Activated CD8-positive, alpha-beta memory T cell treated with anti-CD3 and anti-CD28 coated beads, Interleukin-2, amount 10 ng/mL, durations not matched to agents 7 days and 5 days (primary cell): ENCODE measurements at regions of chr17 and their contacts with region 1.

Region 1: GRCh38 chr17:58172369-58173071 is 5.7 kb downstream of the OR4D2 start:
- DNase-seq: peak; percentile 72
- ATAC-seq: peak; percentile 89
- H3K4me3 Mint-ChIP-seq: no peak overlapping the region
- H3K27ac Mint-ChIP-seq: no peak overlapping the region
- H3K4me1 Mint-ChIP-seq: peaks cover 21% of the 10 kb centered on the region
- H3K27me3 Mint-ChIP-seq: peaks cover 14% of the 10 kb centered on the region

Region 2: GRCh38 chr17:58121925-58122324 is 50.6 kb before region 1 on chr17:
- CTCF ChIA-PET with region 1: interaction called, 38 read pairs
- DNase-seq: peak; percentile 58
- ATAC-seq: peak; percentile 64
- H3K4me3 Mint-ChIP-seq: no peak overlapping the region
- H3K27ac Mint-ChIP-seq: no peak overlapping the region
- H3K4me1 Mint-ChIP-seq: no peaks in the 10 kb centered on the region
- H3K27me3 Mint-ChIP-seq: peaks cover 10% of the 10 kb centered on the region

Region 3: GRCh38 chr17:58153046-58153445 is 19.5 kb before region 1 on chr17:
- CTCF ChIA-PET with region 1: interaction called, 11 read pairs
- DNase-seq: peak; percentile 80
- ATAC-seq: peak; percentile 72
- H3K4me3 Mint-ChIP-seq: peak overlapping the region; percentile 15
- H3K27ac Mint-ChIP-seq: peak overlapping the region; percentile 81
- H3K4me1 Mint-ChIP-seq: peaks cover 35% of the 10 kb centered on the region
- H3K27me3 Mint-ChIP-seq: peaks cover 24% of the 10 kb centered on the region

Region 4: DNA sequence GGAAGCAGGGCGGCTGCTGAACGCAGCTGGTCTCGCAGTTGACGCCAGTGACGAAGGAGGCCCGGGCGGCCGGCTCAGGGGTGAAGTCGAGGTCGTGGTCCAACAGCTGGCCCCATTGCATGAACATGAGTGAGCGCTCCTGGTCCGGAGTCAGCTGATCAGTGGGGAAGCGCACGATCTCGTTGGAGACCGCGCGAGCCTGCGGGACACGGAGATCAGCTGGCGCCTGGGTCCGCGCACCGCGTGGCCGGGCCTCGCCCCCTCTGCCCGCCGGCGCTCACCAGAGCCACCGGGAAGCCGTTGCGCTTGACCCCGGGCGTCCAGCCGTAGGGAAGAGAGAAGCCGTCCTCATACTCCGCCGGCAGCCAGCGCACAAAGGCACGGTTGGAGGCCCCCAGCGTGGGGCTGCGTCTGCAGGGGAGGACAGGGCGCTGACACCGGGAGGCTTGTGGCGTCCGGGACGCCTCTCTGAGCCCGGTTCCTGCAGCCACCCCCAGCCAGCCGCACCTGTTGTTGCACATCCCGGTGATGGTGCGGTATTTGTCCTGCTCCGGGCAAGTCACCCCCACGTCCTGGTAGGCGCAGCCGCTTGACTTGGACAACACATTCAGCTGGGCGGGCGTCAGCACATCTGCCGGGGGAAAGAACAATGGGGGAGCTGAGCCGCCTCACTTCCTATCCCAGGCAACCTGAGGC is 106.6 kb after region 1 on chr17:
- CTCF ChIA-PET with region 1: no interaction called
- DNase-seq: peak; percentile 39
- ATAC-seq: no peak
- H3K4me3 Mint-ChIP-seq: no peak overlapping the region
- H3K27ac Mint-ChIP-seq: no peak overlapping the region
- H3K4me1 Mint-ChIP-seq: peaks cover 5% of the 10 kb centered on the region
- H3K27me3 Mint-ChIP-seq: peaks cover 47% of the 10 kb centered on the region